Activated T-helper 1 cell treated with anti-CD3 and anti-CD28 coated beads, Interleukin-12 subunit alpha, Interleukin-12 subunit beta, Interleukin-2, Interleukin-4 antibody, amounts not matched to agents 30 ng/mL and 10 ng/mL and 1 ng/mL, durations not matched to agents 14 hours and 24 hours and 36 hours (primary cell): ENCODE measurements at regions of chr10 and their contacts with region 1.

Region 1: DNA sequence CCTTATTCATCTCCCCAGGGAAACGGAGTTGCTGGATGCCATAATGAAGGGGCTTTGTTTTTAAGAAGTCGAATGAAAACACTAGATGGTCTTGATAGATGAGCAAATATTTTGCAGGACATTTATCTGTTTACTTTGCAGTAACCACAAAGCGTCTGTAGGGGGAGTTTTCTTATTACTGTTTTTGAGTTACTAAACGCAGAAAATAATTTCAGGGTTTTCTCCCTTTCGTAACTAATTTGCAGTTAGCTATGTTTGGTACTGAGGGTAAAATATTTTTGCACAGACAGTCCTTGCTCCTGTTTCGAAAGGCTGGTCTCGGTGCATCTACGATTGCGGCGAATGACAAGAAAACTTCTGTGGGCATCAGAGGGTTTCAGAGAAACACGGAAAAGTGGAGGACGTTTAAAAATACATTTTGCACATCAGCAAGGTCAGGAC is 505.6 kb upstream of the MKI67 start:
- DNase-seq: no peak
- H3K4me3 Mint-ChIP-seq: no peak overlapping the region
- H3K27ac Mint-ChIP-seq: no peak overlapping the region
- H3K4me1 Mint-ChIP-seq: no peaks in the 10 kb centered on the region
- H3K27me3 Mint-ChIP-seq: peaks cover 1% of the 10 kb centered on the region

Region 2: GRCh38 chr10:128859738-128860386 is 228.0 kb after region 1 on chr10:
- intact Hi-C with region 1: loop called (anchors 2 kb)
- DNase-seq: no peak
- H3K4me3 Mint-ChIP-seq: no peak overlapping the region
- H3K27ac Mint-ChIP-seq: no peak overlapping the region
- H3K4me1 Mint-ChIP-seq: no peaks in the 10 kb centered on the region
- H3K27me3 Mint-ChIP-seq: no peaks in the 10 kb centered on the region

Region 3: GRCh38 chr10:128875956-128876736 is 244.3 kb after region 1 on chr10:
- intact Hi-C with region 1: no loop called
- DNase-seq: no peak
- H3K4me3 Mint-ChIP-seq: no peak overlapping the region
- H3K27ac Mint-ChIP-seq: no peak overlapping the region
- H3K4me1 Mint-ChIP-seq: no peaks in the 10 kb centered on the region
- H3K27me3 Mint-ChIP-seq: no peaks in the 10 kb centered on the region